Sciatic nerve (tissue), 2 donors: ENCODE measurements at regions of chr18 and their contacts with region 1.

Region 1: DNA sequence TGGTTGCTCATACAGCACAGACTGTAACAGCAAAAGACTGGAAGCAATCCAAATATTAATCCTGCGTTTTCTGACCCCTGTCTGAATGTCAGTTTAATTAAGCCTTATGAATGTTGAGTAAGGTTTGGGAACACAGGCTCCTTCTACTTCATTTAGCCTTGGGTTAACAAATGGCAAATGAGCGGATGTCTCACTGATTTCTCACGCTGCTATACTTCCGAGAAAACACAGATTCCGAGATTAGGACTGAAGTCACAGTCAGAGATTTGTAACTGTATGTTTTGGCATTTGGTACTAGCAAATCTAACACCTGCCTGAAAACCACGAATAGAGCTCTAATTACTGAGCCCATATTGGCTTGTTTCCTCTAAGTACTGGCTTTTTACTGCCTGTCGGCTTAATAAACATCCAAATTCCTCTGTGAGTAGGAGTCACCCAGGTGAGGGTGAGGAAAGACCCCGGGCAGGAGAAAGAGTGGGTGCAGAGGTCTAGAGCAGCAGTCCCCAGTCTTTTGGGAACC is 10.6 kb downstream of the MC5R start:
- DNase-seq: no peak
- ATAC-seq: no peak

Region 2: DNA sequence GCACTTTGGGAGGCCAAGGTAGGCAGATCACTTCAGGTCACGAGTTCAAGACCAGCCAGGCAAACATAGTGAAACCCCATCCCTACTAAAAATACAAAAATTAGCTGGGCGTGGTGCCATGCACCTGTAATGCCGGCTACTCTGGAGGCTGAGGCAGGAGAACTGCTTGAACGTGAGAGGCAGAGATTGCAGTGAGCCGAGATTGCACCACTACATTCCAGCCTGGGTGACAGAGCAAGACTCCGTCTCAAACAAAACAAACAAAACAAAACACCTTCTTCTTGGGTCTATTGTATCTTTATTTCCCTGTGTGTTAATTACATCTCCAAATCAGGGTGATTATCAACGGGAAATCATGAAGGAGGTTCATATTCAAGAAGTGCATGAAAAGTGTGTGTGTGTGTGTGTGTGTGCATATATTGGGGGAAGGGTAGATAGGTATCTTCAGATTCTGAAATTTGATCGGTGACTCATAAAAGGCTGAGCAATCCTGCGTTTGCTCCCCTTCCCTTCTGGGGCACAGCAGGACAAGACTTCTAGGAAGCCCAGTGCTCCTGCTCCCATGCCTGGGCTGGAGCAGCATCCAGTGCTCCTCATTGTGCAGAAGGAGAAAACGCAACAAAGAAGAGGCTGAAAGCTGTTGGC is 15.1 kb after region 1 on chr18:
- intact Hi-C with region 1: loop called (anchors 1 kb)
- DNase-seq: no peak
- ATAC-seq: no peak